Mammary epithelial cell (primary cell): ENCODE measurements at regions of chr17 and their contacts with region 1.

Region 1: GRCh38 chr17:15171167-15172047 is 93.7 kb downstream of the PMP22 start:
- DNase-seq: peak; percentile 47
- H3K4me3 ChIP-seq: no peak overlapping the region
- H3K27ac ChIP-seq: no peak overlapping the region
- H3K4me1 ChIP-seq: no peaks in the 10 kb centered on the region
- H3K27me3 ChIP-seq: peaks cover 2% of the 10 kb centered on the region
- CTCF ChIP-seq: peak; percentile 82 to 86

Region 2: DNA sequence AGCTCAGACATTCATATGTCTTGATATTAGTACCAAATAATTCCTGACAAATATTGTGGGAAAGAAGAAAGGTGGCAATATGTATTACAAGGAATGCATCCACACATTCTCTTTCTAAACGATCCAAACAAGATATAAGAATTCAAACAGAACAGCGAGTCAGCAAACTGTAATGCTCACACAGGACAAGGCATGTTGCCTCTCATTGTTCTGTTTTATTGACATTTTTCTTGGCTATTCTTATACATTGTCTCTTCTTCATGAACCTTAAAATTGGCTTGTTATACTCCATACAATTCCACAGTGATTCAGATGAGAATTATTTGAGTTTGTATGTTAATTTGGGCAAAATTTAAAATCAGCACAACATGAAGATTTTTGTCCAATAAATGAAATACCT is 681.4 kb before region 1 on chr17:
- CTCF ChIA-PET with region 1: no interaction called
- dilution Hi-C with region 1: no loop called
- in situ Hi-C with region 1: no loop called
- intact Hi-C with region 1: no loop called
- DNase-seq: peak; percentile 8
- H3K4me3 ChIP-seq: no peak overlapping the region
- H3K27ac ChIP-seq: no peak overlapping the region
- H3K4me1 ChIP-seq: no peaks in the 10 kb centered on the region
- H3K27me3 ChIP-seq: no peaks in the 10 kb centered on the region
- CTCF ChIP-seq: no peak

Region 3: GRCh38 chr17:14756469-14756868 is 414.9 kb before region 1 on chr17:
- CTCF ChIA-PET with region 1: interaction called, 11 read pairs
- dilution Hi-C with region 1: no loop called
- in situ Hi-C with region 1: no loop called
- intact Hi-C with region 1: no loop called
- DNase-seq: no peak
- H3K4me3 ChIP-seq: no peak overlapping the region
- H3K27ac ChIP-seq: no peak overlapping the region
- H3K4me1 ChIP-seq: peaks cover 12% of the 10 kb centered on the region
- H3K27me3 ChIP-seq: no peaks in the 10 kb centered on the region
- CTCF ChIP-seq: no peak

Region 4: DNA sequence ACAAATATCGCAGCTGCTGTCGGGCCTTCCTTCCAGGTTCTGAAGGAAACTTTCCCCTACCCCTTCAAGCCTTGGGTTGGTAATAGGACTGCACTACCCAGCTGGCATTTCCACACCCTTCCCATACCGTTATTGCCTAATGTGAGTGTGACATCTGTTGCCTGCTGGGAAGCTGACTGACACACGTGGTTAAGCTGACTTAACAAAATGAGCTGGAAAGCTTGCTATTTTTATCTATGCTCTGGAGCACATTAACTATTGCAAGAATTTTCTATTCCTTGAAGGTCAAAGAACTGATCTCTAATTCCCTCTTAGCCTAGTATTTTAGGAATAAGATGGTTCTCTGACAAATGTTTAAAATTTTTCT is 14.2 kb after region 1 on chr17:
- CTCF ChIA-PET with region 1: no interaction called
- dilution Hi-C with region 1: no loop called
- in situ Hi-C with region 1: no loop called
- intact Hi-C with region 1: no loop called
- DNase-seq: peak; percentile 5
- H3K4me3 ChIP-seq: no peak overlapping the region
- H3K27ac ChIP-seq: no peak overlapping the region
- H3K4me1 ChIP-seq: no peaks in the 10 kb centered on the region
- H3K27me3 ChIP-seq: peaks cover 4% of the 10 kb centered on the region
- CTCF ChIP-seq: no peak

Region 5: GRCh38 chr17:15289285-15290185 is 118.1 kb after region 1 on chr17:
- CTCF ChIA-PET with region 1: no interaction called
- dilution Hi-C with region 1: no loop called
- in situ Hi-C with region 1: no loop called
- intact Hi-C with region 1: no loop called
- DNase-seq: no peak
- H3K4me3 ChIP-seq: no peak overlapping the region
- H3K27ac ChIP-seq: no peak overlapping the region
- H3K4me1 ChIP-seq: no peaks in the 10 kb centered on the region
- H3K27me3 ChIP-seq: peaks cover 5% of the 10 kb centered on the region
- CTCF ChIP-seq: no peak